ENCODE measurements at regions of chr3 and their contacts with region 1.

Region 1: GRCh38 chr3:25751725-25752124 is 31.5 kb downstream of the NGLY1 start:
- DNase-seq: no peak
- ATAC-seq: no peak

Region 2: GRCh38 chr3:25621087-25621486 is 130.6 kb before region 1 on chr3:
- intact Hi-C with region 1: loop called (anchors 10 kb)
- DNase-seq: no peak
- ATAC-seq: no peak

Region 3: GRCh38 chr3:25820366-25820765 is 68.6 kb after region 1 on chr3:
- intact Hi-C with region 1: no loop called
- DNase-seq: no peak
- ATAC-seq: no peak

Measured in Right ventricle myocardium superior (tissue), 1 donor.